ENCODE measurements at regions of chr22 and their contacts with region 1.

Region 1: GRCh38 chr22:43346521-43346929 is 3.4 kb upstream of the SCUBE1 start:
- DNase-seq: peak in 1 of 2 donors; percentile 70
- H3K4me3 ChIP-seq: no peak overlapping the region
- H3K27ac ChIP-seq: no peak overlapping the region
- H3K4me1 ChIP-seq: peaks cover 0 to 3% of the 10 kb centered on the region in 2 donors
- H3K27me3 ChIP-seq: peaks cover 14% of the 10 kb centered on the region
- CTCF ChIP-seq: peak in 2 of 3 experiments; percentile 37 to 59

Region 2: GRCh38 chr22:43273902-43274484 is 72.5 kb before region 1 on chr22:
- intact Hi-C with region 1: loop called (anchors 1 kb)
- DNase-seq: no peak
- H3K4me3 ChIP-seq: no peak overlapping the region
- H3K27ac ChIP-seq: no peak overlapping the region
- H3K4me1 ChIP-seq: no peaks in the 10 kb centered on the region
- H3K27me3 ChIP-seq: no peaks in the 10 kb centered on the region
- CTCF ChIP-seq: peak; percentile 44 to 57 (median 55)

Region 3: GRCh38 chr22:43293655-43294392 is 52.7 kb before region 1 on chr22:
- intact Hi-C with region 1: loop called (anchors 5 kb)
- DNase-seq: no peak
- H3K4me3 ChIP-seq: no peak overlapping the region
- H3K27ac ChIP-seq: no peak overlapping the region
- H3K4me1 ChIP-seq: peaks cover 3 to 49% of the 10 kb centered on the region in 2 donors
- H3K27me3 ChIP-seq: no peaks in the 10 kb centered on the region
- CTCF ChIP-seq: no peak

Region 4: GRCh38 chr22:43308060-43308830 is 38.3 kb before region 1 on chr22:
- intact Hi-C with region 1: no loop called
- DNase-seq: no peak
- H3K4me3 ChIP-seq: no peak overlapping the region
- H3K27ac ChIP-seq: no peak overlapping the region
- H3K4me1 ChIP-seq: peaks cover 0 to 17% of the 10 kb centered on the region in 2 donors
- H3K27me3 ChIP-seq: peaks cover 4% of the 10 kb centered on the region
- CTCF ChIP-seq: no peak

Measured in ascending aorta (tissue), 2 donors.